H1 (cell line): ENCODE measurements at regions of chr7 and their contacts with region 1.

Region 1: DNA sequence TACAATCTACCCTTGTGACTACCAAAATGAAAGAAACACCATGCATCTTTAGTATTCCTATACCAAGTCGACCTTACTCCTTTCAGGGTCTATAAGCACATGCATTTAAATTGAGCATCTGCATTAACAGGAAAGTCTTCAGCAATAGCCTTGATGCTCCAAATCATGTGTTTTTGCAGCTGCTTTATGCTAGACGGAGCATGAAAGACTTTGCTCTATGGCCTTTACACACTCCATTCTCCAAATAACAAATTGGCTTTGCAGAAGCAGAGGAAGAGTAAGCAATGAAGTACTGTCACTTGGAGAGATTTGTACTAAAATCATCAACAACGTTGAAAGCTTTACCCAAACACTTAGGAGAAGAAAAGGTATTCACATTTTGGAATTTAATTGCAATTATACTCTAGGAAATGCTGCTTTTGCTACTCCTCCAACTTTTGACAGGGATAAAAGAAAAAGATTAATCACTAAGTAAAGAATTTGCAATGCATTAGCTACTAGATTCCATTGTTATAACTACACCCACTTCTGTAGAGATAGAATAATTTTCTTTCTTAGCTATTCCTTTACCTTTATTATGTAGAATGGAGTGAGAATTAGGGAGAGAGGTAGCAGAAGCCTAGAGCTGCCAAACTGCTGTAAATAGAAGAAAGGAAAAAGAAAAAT is 131.8 kb downstream of the SEMA3E start:
- DNase-seq: no peak
- H3K4me3 ChIP-seq: no peak overlapping the region
- H3K27ac ChIP-seq: no peak overlapping the region
- H3K4me1 ChIP-seq: peaks cover 0 to 5% (median 1%) of the 10 kb centered on the region in 4 experiments; a peak in 3 of 7 replicates
- H3K27me3 ChIP-seq: no peaks in the 10 kb centered on the region
- CTCF ChIP-seq: no peak
- EP300 ChIP-seq: no peak
- POLR2A ChIP-seq: no peak
- RAD21 ChIP-seq: no peak

Region 2: GRCh38 chr7:83365746-83366145 is 151.4 kb before region 1 on chr7:
- CTCF ChIA-PET with region 1: interaction called, 12 read pairs
- POLR2A ChIA-PET with region 1: no interaction called
- DNase-seq: no peak
- H3K4me3 ChIP-seq: no peak overlapping the region
- H3K27ac ChIP-seq: no peak overlapping the region
- H3K4me1 ChIP-seq: no peaks in the 10 kb centered on the region
- H3K27me3 ChIP-seq: no peaks in the 10 kb centered on the region
- CTCF ChIP-seq: peak in 1 of 3 experiments; percentile 14; a peak in 1 of 4 replicates
- EP300 ChIP-seq: no peak
- POLR2A ChIP-seq: no peak
- RAD21 ChIP-seq: peak in 1 of 2 experiments; percentile 35; a peak in 2 of 4 replicates

Region 3: GRCh38 chr7:83599131-83599530 is 82.0 kb after region 1 on chr7:
- CTCF ChIA-PET with region 1: no interaction called
- POLR2A ChIA-PET with region 1: no interaction called
- DNase-seq: no peak
- H3K4me3 ChIP-seq: no peak overlapping the region
- H3K27ac ChIP-seq: no peak overlapping the region
- H3K4me1 ChIP-seq: no peaks in the 10 kb centered on the region
- H3K27me3 ChIP-seq: no peaks in the 10 kb centered on the region
- CTCF ChIP-seq: no peak
- EP300 ChIP-seq: no peak
- POLR2A ChIP-seq: no peak
- RAD21 ChIP-seq: no peak

Region 4: GRCh38 chr7:83648464-83649241 is 131.5 kb after region 1 on chr7 and contains the start of gene SEMA3E:
- CTCF ChIA-PET with region 1: no interaction called
- POLR2A ChIA-PET with region 1: no interaction called
- DNase-seq: peak in 1 of 2 experiments; percentile 54
- H3K4me3 ChIP-seq: peak within 1 kb of the TSS; percentile 30 to 67 (median 50)
- H3K27ac ChIP-seq: no peak within 1 kb of the TSS
- H3K4me1 ChIP-seq: peaks cover 0 to 4% (median 2%) of the 10 kb centered on the region in 4 experiments; a peak in 4 of 7 replicates
- H3K27me3 ChIP-seq: no peaks in the 10 kb centered on the region
- CTCF ChIP-seq: peak in 1 of 3 experiments; percentile 33; a peak in 1 of 4 replicates
- EP300 ChIP-seq: no peak
- POLR2A ChIP-seq: no peak
- RAD21 ChIP-seq: peak in 1 of 2 experiments; percentile 42; a peak in 2 of 4 replicates
- total RNA-seq, gene SEMA3E: 0.93 and 1.9 TPM in 2 replicates